Right ventricle myocardium superior (tissue), 1 donor: ENCODE measurements at regions of chr11 and their contacts with region 1.

Region 1: GRCh38 chr11:33168709-33169200 is 7.5 kb upstream of the CSTF3 start:
- DNase-seq: no peak
- ATAC-seq: peak; percentile 51

Region 2: DNA sequence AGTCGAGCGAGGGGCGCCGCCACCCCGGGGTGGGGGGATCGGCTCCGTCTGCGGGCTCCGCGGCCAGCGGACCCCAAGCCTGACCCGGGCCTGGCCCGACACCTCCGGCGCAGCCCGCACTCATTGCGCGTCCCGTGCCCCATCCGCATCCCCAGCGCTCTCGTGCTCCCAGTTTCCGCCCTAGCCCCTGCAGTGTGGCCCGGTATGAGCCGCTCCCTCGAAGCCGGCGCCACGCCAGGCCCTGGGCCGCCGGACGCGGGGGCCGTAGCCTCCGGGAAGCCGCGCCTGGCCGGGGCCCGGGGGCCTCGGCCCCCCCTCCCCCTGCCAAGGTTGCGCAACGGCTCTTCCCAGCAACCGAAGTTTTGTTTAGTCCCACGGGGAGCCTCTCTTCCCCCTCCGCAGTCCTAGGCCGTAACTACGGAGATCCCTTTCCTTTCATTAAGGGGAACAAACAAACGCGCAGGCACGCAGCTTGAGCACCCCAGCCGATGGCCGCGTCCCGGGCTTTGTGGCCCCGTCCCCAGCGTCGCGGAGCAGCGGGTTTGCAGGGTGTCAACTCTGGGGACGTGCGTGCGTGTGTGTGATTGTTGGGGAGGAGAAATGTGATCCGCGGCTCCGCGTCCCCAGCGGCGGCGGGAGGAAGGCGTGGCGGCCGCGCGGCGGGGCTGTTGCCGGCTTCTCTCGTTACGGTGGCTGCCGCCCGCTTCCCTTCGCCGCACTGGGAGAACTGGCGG is 89.3 kb after region 1 on chr11:
- intact Hi-C with region 1: loop called (anchors 5 kb)
- DNase-seq: peak; percentile 94
- ATAC-seq: peak; percentile 91